WTC11 (cell line): ENCODE measurements at regions of chr19 and their contacts with region 1.

Region 1: GRCh38 chr19:47428177-47428894 is 9.0 kb upstream of the MEIS3 start:
- DNase-seq: peak; percentile 97
- ATAC-seq: peak; percentile 75
- H3K4me3 Mint-ChIP-seq: no peak overlapping the region
- H3K27ac Mint-ChIP-seq: no peak overlapping the region
- H3K4me1 Mint-ChIP-seq: peaks cover 13% of the 10 kb centered on the region
- H3K27me3 Mint-ChIP-seq: peaks cover 80% of the 10 kb centered on the region
- CTCF ChIP-seq: no peak

Region 2: GRCh38 chr19:47284324-47284899 is 143.9 kb before region 1 on chr19:
- CTCF ChIA-PET with region 1: interaction called, 18 read pairs
- POLR2A ChIA-PET with region 1: no interaction called
- DNase-seq: no peak
- ATAC-seq: peak; percentile 54
- H3K4me3 Mint-ChIP-seq: no peak overlapping the region
- H3K27ac Mint-ChIP-seq: no peak overlapping the region
- H3K4me1 Mint-ChIP-seq: peaks cover under 1% of the 10 kb centered on the region
- H3K27me3 Mint-ChIP-seq: no peaks in the 10 kb centered on the region
- CTCF ChIP-seq: peak; percentile 85

Region 3: DNA sequence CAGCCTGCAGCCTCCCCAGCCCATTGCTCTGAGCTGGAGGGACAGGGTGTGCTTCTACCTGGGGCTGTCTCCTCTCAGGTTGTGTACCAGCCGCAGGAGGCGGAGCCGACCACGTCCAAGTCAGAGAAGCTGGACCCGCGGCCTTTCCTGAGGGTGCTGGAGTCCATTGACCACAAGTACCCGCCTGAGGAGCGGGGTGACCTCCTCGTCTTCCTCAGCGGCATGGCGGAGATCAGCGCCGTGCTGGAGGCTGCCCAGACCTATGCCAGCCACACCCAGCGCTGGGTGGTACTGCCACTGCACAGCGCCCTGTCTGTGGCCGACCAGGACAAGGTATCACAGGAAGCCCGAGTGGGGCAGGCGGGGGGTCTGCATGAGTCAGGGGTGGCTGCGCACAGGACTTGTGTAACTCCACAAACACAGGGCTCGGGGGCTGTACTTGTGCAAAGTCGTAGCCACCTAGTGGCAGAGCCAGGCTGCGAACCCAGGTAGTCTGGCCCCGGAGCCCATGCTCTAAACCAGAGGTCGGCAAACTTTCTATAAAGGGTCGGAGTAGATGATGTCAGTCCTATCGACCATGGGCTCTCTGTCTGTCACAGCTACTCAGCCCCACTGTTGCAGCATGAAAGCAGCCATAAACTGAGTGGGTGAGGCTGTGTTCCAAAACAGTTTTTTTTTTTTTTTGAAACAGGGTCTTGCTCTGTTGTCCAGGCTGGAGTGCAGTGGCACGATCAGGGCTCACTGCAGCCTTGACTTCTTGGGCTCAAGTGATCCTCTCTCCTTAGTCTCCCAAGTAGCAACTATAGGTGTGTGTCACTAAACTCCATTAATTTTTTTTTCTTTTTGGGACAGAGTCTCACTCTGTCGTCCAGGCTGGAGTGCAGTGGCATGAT is 70.3 kb before region 1 on chr19:
- CTCF ChIA-PET with region 1: no interaction called
- POLR2A ChIA-PET with region 1: no interaction called
- DNase-seq: peak; percentile 62
- ATAC-seq: peak; percentile 72
- H3K4me3 Mint-ChIP-seq: no peak overlapping the region
- H3K27ac Mint-ChIP-seq: no peak overlapping the region
- H3K4me1 Mint-ChIP-seq: no peaks in the 10 kb centered on the region
- H3K27me3 Mint-ChIP-seq: no peaks in the 10 kb centered on the region
- CTCF ChIP-seq: no peak

Region 4: GRCh38 chr19:47398707-47399597 is 29.4 kb before region 1 on chr19:
- CTCF ChIA-PET with region 1: no interaction called
- POLR2A ChIA-PET with region 1: no interaction called
- DNase-seq: peak; percentile 33
- ATAC-seq: peak; percentile 77
- H3K4me3 Mint-ChIP-seq: peak overlapping the region; percentile 13
- H3K27ac Mint-ChIP-seq: peak overlapping the region; percentile 96
- H3K4me1 Mint-ChIP-seq: peaks cover 28% of the 10 kb centered on the region
- H3K27me3 Mint-ChIP-seq: peaks cover under 1% of the 10 kb centered on the region; the same call in 1 of the 2 replicates
- CTCF ChIP-seq: no peak

Region 5: DNA sequence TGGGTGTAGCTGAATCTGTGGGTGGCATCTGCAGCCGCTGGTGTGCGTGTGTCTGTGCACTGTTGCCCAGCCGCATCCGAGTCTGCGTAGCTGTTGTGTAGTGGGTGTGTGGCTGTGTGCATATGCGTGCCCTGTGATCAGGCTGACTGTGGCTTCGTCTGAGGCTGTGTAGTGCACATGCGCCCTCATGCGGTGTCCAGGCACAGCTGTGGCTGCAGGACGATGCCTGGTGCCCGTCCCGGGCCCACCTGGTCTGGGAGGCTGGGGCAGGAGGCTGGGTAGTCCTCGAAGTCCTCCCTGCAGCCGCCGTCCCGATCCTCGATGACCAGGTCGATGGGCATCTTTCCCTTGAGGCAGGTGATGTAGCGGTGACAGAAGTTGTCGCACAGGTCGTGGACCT is 13.9 kb before region 1 on chr19:
- CTCF ChIA-PET with region 1: interaction called, 23 read pairs
- POLR2A ChIA-PET with region 1: interaction called, 5 read pairs
- DNase-seq: peak; percentile 73
- ATAC-seq: peak; percentile 59
- H3K4me3 Mint-ChIP-seq: no peak overlapping the region
- H3K27ac Mint-ChIP-seq: no peak overlapping the region; the same call in 1 of the 2 replicates
- H3K4me1 Mint-ChIP-seq: peaks cover 28% of the 10 kb centered on the region
- H3K27me3 Mint-ChIP-seq: peaks cover 39% of the 10 kb centered on the region
- CTCF ChIP-seq: 0 out of 2 replicates have a peak, but pooled peaks have one; percentile 26

Region 6: GRCh38 chr19:47483800-47484690 is 55.7 kb after region 1 on chr19 and contains the start of gene KPTN:
- CTCF ChIA-PET with region 1: interaction called, 29 read pairs
- POLR2A ChIA-PET with region 1: interaction called, 3 read pairs
- DNase-seq: peak; percentile 91
- ATAC-seq: peak; percentile 62
- H3K4me3 Mint-ChIP-seq: peak within 1 kb of the TSS; percentile 96
- H3K27ac Mint-ChIP-seq: peak within 1 kb of the TSS; percentile 98
- H3K4me1 Mint-ChIP-seq: peaks cover 18% of the 10 kb centered on the region
- H3K27me3 Mint-ChIP-seq: peaks cover 9% of the 10 kb centered on the region
- CTCF ChIP-seq: peak; percentile 96
- total RNA-seq, gene KPTN: 24.5 to 30.2 TPM (median 29.5 TPM) in 3 replicates

Region 7: GRCh38 chr19:47494211-47494547 is 65.8 kb after region 1 on chr19:
- CTCF ChIA-PET with region 1: no interaction called
- POLR2A ChIA-PET with region 1: no interaction called
- DNase-seq: no peak
- ATAC-seq: no peak
- H3K4me3 Mint-ChIP-seq: no peak overlapping the region
- H3K27ac Mint-ChIP-seq: no peak overlapping the region; the same call in 1 of the 2 replicates
- H3K4me1 Mint-ChIP-seq: peaks cover 5% of the 10 kb centered on the region; the same call in 1 of the 2 replicates
- H3K27me3 Mint-ChIP-seq: no peaks in the 10 kb centered on the region
- CTCF ChIP-seq: no peak

Region 8: DNA sequence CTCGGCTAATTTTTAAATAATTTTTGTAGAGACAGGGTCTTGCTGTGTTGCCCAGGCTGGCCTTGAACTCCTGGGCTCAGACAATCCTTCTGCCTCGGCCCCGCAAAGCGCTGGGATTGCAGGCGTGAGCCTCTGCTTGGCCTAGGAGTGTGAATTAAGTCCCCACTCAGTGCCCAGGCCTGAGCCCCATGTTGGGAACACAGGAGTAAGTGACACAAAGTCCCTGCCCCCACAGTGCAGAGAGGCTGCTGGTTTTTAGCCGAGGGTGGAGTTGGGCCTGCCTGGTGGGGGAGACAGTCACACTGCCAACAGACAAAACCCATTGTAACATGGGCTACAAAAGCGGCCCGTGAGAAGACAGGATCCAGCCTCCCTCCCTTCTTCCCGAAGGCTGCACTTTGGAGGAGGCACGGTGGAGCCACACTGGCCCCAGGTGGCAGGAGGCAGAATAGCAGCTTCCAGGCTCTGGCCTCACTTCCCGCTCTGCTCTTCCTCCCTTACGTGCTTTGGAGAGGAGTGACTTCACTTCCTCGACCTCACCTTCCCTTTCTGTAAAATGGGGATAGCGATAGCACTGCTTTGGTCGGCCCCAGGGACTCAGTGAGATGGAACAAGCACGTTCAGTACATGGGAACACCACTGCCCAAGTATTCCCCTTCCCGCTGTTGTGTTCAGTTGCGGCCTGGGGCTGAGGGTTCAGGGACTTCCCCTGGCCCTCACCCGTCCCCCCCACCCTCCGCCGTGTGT is 269.7 kb after region 1 on chr19:
- CTCF ChIA-PET with region 1: interaction called, 23 read pairs
- POLR2A ChIA-PET with region 1: no interaction called
- DNase-seq: peak; percentile 86
- ATAC-seq: peak; percentile 84
- H3K4me3 Mint-ChIP-seq: no peak overlapping the region
- H3K27ac Mint-ChIP-seq: peak overlapping the region; percentile 91
- H3K4me1 Mint-ChIP-seq: 0 out of 2 replicates have a peak, but pooled peaks cover 2% of the 10 kb centered on the region
- H3K27me3 Mint-ChIP-seq: no peaks in the 10 kb centered on the region
- CTCF ChIP-seq: peak; percentile 93

Region 9: DNA sequence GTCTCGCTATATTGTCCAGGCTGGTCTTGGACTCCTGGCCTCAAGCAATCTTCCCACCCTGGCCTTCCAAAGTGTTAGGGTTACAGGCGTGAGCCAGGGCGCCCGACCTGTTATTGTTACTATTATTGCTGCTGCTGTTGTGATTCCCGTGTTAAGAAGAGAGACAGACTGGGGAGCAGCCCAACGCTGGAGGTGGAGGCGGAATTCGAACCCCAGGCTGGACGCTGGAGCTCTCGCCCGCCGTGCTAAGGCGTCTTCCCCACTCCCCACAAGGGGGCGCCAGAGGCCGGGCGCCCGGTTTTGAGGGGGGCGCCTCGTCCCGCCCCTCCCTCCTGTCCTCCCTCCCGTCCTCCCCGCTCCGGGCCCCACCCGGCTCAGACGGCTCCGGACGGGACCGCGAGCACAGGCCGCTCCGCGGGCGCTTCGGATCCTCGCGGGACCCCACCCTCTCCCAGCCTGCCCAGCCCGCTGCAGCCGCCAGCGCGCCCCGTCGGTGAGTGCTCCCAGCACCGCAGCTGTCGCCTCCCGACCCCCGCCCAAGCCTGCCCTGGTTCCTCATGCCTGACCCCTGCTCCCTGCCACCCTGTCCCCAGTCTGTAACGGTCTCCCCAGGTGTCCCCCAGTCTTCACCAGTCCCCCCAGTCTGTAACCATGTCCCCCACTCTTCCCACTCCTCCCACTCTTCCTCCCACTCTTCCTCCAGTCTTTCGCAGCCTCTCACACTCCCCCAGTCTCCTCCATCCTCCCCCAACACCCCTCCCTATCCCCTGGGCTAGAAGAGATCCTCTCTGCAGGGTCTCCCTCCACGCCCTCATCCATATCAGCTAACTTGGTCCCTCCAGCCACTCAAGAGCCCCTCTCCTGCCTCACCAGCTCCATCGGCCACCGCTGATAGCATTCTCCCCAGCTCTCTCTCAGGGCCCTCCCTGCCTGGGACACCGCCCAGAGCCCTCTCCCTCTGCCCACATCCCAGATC is 285.0 kb after region 1 on chr19 and contains the start of gene EHD2:
- CTCF ChIA-PET with region 1: interaction called, 45 read pairs
- POLR2A ChIA-PET with region 1: no interaction called
- DNase-seq: peak; percentile 72
- ATAC-seq: peak; percentile 81
- H3K4me3 Mint-ChIP-seq: peak within 1 kb of the TSS; percentile 66
- H3K27ac Mint-ChIP-seq: no peak within 1 kb of the TSS
- H3K4me1 Mint-ChIP-seq: 0 out of 2 replicates have a peak, but pooled peaks cover 7% of the 10 kb centered on the region
- H3K27me3 Mint-ChIP-seq: peaks cover 22% of the 10 kb centered on the region
- CTCF ChIP-seq: peak; percentile 97
- total RNA-seq, gene EHD2: 11.8 to 15.5 TPM (median 15.4 TPM) in 3 replicates